ENCODE measurements at regions of chr11 and their contacts with region 1.

Region 1: GRCh38 chr11:8813658-8814057 is 97.3 kb upstream of the AKIP1 start:
- DNase-seq: peak; percentile 81
- CTCF ChIP-seq: peak; percentile 77

Region 2: GRCh38 chr11:8593935-8594909 is 219.4 kb before region 1 on chr11 and contains the start of gene STK33:
- CTCF ChIA-PET with region 1: no interaction called
- POLR2A ChIA-PET with region 1: no interaction called
- DNase-seq: peak; percentile 89
- CTCF ChIP-seq: no peak

Region 3: DNA sequence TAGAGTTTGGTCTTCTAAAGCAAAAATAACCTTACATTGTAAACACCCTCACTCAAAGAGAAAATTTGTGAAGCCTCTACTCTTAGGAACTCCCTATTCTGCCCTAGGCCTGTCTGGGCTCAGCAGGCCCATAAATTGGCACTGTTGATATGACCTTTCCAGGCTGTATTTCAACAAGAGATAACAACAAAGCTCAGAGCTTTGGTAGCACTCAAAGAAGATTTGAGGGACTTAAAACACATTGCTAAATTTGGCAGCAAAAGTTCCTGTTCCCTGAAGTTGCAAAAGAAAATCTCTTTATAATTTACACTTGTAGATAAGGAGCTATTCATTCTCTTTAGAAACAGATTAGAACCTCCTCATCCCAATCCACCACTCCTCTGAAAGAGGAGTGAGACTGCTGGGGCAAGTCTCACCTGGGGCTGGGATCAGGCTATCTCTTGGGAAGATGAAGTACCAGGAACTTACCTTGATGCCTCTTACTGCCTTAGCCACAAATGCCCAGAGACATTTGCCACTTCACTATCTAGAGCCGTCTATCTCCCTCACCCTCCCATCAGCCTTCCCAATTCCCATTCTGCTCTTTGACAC is 13.0 kb before region 1 on chr11:
- CTCF ChIA-PET with region 1: interaction called, 18 read pairs
- POLR2A ChIA-PET with region 1: no interaction called
- DNase-seq: no peak
- CTCF ChIP-seq: no peak

Region 4: DNA sequence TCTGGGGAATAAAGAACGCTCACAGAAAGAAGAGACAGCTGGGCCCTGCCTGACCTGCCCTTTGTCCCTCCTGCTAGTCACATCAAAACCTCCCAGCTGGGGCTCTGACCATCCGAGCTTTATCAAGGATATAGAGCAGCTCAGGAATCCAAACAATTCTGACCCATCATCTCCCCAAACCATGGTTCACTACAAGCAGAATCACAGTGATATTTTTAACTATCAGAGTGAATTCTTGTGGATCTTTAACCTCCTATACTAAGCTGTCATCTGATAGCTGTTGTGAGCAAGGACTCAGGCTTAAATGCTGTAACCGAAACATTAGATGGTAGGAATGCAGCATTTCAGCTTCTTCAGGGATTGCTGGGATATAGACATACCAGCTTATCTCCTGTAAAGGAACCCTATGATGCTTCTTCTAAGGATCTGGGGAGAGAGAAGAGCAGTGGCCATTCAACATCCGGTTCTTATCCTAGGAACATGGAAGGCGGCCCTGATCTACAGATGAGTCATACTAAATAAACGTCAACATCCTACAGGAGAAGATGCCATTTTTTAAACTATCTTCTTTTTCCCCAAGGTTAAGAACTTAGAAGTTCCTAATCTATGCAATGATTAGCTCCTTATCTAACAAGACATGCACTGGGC is 12.6 kb after region 1 on chr11:
- CTCF ChIA-PET with region 1: interaction called, 23 read pairs
- POLR2A ChIA-PET with region 1: no interaction called
- DNase-seq: no peak
- CTCF ChIP-seq: no peak

Region 5: GRCh38 chr11:8832571-8833260 is 19.1 kb after region 1 on chr11:
- CTCF ChIA-PET with region 1: interaction called, 23 read pairs
- POLR2A ChIA-PET with region 1: no interaction called
- DNase-seq: peak; percentile 74
- CTCF ChIP-seq: no peak